ENCODE measurements at regions of chr3 and their contacts with region 1.

Region 1: GRCh38 chr3:61080737-61081445 is 170.4 kb downstream of the FHIT start:
- DNase-seq: no peak
- H3K4me3 ChIP-seq: no peak overlapping the region
- H3K27ac ChIP-seq: no peak overlapping the region
- H3K4me1 ChIP-seq: no peaks in the 10 kb centered on the region
- H3K27me3 ChIP-seq: no peaks in the 10 kb centered on the region
- CTCF ChIP-seq: no peak
- POLR2A ChIP-seq: no peak

Region 2: GRCh38 chr3:62229920-62230319 is 1149.0 kb after region 1 on chr3:
- intact Hi-C with region 1: no loop called
- DNase-seq: no peak
- H3K4me3 ChIP-seq: no peak overlapping the region
- H3K27ac ChIP-seq: no peak overlapping the region
- H3K4me1 ChIP-seq: no peaks in the 10 kb centered on the region
- H3K27me3 ChIP-seq: no peaks in the 10 kb centered on the region
- CTCF ChIP-seq: no peak
- POLR2A ChIP-seq: no peak

Region 3: DNA sequence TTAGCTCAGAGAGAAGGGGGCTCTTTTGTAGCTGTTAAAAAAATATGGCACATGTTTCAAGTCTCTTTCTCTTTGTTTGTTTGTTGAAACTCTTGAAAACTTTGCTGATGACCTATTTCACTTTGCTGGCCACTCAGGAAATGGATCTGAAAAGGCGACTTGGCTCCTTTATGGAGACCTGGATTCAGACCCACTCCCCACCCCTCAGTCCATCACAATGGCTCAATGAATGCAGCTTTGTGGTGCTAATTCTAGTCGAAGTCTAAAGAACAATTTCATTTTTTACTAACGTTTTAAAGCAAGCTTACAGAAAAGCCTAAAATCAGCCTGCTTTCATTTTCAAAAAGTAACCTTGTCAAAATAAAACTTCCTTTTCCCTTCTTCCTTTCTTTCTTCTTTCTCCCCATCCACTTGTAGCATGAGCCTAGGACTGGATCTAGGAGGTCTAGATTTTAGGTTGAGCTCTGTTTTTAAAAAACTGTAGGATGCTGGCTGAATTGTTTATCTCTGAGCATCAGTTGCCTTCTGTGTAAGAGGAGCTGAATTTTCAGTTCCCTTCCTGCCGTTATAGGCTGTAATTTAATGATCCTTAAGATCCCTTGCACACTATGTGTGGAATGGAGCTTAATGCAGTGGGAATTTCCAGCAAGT is 1457.9 kb after region 1 on chr3:
- intact Hi-C with region 1: loop called (anchors 5 kb)
- DNase-seq: no peak
- H3K4me3 ChIP-seq: no peak overlapping the region
- H3K27ac ChIP-seq: no peak overlapping the region
- H3K4me1 ChIP-seq: no peaks in the 10 kb centered on the region
- H3K27me3 ChIP-seq: no peaks in the 10 kb centered on the region
- CTCF ChIP-seq: no peak
- POLR2A ChIP-seq: no peak